Dendritic cell treated with granulocyte-macrophage colony-stimulating factor and Interleukin-4, amounts not matched to agents 40 ng/mL and 50 ng/mL, for 4 days (primary cell): ENCODE measurements at regions of chr11 and their contacts with region 1.

Region 1: DNA sequence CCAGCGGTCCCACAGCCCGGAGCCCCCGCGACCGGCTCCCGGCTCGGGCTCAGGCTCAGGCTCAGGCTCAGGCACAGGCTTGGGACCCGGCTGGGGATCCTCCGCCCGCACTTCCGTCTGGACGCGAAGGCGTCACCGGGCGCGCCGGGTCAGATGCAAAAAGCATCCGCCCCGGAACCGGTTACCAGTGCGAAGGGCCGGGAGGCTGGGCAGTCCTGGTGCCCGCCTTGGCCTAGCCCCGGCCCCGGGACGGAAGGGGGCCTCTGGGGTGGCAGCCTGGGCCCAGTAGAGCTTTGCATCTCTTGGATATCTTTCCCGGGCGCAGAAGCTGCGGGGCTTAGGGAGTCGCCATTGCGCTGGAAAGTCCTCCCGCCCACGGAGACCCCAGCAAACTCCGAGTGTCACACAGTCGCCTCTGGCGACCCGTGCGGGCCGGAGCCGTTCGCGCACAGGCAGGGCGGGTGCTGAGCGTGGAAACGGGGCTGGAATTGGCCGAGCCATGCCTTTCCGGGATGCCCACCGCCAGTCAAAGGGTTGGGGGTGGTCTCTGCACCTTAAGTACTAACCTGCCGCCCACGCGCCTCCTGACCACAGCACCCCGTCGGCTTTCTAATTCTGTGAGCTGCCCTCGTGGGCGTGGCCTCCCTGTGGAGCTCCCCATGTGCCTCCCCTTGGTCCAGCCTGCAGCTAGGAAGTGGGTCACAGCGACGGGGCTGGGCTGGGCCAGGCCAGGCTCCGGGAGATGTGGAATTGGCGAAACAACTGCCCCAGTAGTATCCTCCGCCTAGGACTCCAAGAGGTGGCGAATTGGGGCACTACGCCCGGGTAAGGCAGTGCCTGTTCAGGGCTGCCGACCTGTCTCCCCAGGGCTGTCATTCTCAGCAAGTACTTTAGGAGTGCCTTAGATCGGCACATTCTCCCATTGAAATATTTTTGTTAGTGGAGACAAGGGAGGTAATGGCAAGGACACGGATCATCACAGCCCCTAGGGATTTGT is at the start of gene TMEM9B:
- H3K4me3 Mint-ChIP-seq: peak within 1 kb of the TSS; percentile 100
- H3K27ac Mint-ChIP-seq: peak within 1 kb of the TSS; percentile 95
- H3K4me1 Mint-ChIP-seq: peaks cover 45% of the 10 kb centered on the region
- H3K27me3 Mint-ChIP-seq: no peaks in the 10 kb centered on the region

Region 2: GRCh38 chr11:8604078-8604723 is 360.4 kb before region 1 on chr11:
- intact Hi-C with region 1: loop called (anchors 10 kb)
- H3K4me3 Mint-ChIP-seq: no peak overlapping the region
- H3K27ac Mint-ChIP-seq: no peak overlapping the region
- H3K4me1 Mint-ChIP-seq: peaks cover 12% of the 10 kb centered on the region
- H3K27me3 Mint-ChIP-seq: peaks cover 8% of the 10 kb centered on the region

Region 3: GRCh38 chr11:8813658-8814057 is 151.0 kb before region 1 on chr11:
- intact Hi-C with region 1: loop called (anchors 5 kb)
- H3K4me3 Mint-ChIP-seq: no peak overlapping the region
- H3K27ac Mint-ChIP-seq: no peak overlapping the region
- H3K4me1 Mint-ChIP-seq: peaks cover 8% of the 10 kb centered on the region
- H3K27me3 Mint-ChIP-seq: peaks cover 14% of the 10 kb centered on the region

Region 4: DNA sequence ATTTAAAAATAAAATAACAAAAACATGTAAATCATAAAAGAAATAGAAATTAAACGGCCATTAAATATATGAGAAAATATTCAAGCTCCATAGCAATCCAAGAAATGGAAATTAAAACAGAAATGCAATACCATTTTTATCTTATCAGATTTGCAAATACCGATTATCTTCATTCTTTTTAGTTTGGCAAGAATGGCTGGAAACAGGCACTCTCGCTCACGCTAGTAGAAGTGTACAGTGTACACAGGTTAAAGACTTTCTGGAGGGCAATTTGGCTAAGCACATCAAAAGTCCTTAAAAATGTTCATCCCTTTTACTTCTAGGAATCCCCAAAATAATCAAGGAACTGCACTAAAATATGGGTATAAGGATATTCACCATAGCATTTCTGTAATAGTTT is 113.3 kb before region 1 on chr11:
- intact Hi-C with region 1: no loop called
- H3K4me3 Mint-ChIP-seq: no peak overlapping the region
- H3K27ac Mint-ChIP-seq: no peak overlapping the region
- H3K4me1 Mint-ChIP-seq: no peaks in the 10 kb centered on the region
- H3K27me3 Mint-ChIP-seq: peaks cover 9% of the 10 kb centered on the region

Region 5: GRCh38 chr11:8922691-8923090 is 41.9 kb before region 1 on chr11:
- intact Hi-C with region 1: no loop called
- H3K4me3 Mint-ChIP-seq: no peak overlapping the region
- H3K27ac Mint-ChIP-seq: no peak overlapping the region
- H3K4me1 Mint-ChIP-seq: no peaks in the 10 kb centered on the region
- H3K27me3 Mint-ChIP-seq: no peaks in the 10 kb centered on the region

Region 6: DNA sequence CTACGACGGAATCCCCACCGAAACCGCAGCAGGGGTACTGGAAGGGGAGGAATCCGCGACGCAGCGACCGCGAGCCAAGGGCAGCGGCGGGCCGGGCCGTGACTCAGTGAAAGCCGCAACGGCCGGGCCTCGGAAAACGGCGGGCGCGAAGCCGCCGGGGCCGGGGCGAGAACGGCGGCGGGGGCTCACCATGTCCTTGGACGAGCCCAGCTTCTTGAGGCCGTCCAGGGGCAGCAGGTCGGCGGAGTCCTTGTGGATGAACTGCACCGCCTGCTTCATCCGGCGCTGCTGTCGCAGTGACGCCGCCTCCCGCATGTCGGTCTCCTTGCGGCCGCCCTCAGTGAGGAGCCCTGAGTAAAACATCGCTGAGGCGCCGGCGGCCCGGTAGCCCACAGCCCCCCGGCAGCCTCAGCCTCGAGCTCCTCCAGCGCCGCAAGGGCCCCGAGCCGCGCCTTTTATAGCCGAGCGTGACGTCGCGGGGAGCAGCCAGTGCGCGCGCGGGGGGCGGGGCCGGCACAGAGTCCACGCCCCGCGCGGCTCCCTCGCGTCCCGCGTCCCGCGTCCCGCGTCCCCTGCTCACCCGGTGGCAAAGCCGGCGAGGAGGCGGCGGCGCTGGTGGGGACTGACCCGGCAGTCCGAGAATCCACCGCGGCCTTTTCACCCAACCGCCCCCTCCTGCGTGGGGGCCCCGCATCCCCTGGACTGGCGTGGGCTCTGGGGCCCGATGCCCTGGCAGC is 39.1 kb after region 1 on chr11 and contains the start of gene NRIP3:
- intact Hi-C with region 1: loop called (anchors 5 kb)
- H3K4me3 Mint-ChIP-seq: peak within 1 kb of the TSS; percentile 71
- H3K27ac Mint-ChIP-seq: peak within 1 kb of the TSS; percentile 74
- H3K4me1 Mint-ChIP-seq: peaks cover 15% of the 10 kb centered on the region
- H3K27me3 Mint-ChIP-seq: peaks cover 34% of the 10 kb centered on the region

Region 7: GRCh38 chr11:9137293-9138132 is 172.9 kb after region 1 on chr11:
- intact Hi-C with region 1: loop called (anchors 2 kb)
- H3K4me3 Mint-ChIP-seq: no peak overlapping the region
- H3K27ac Mint-ChIP-seq: no peak overlapping the region
- H3K4me1 Mint-ChIP-seq: peaks cover 22% of the 10 kb centered on the region
- H3K27me3 Mint-ChIP-seq: no peaks in the 10 kb centered on the region